ENCODE measurements at regions of chr6 and their contacts with region 1.

Region 1: DNA sequence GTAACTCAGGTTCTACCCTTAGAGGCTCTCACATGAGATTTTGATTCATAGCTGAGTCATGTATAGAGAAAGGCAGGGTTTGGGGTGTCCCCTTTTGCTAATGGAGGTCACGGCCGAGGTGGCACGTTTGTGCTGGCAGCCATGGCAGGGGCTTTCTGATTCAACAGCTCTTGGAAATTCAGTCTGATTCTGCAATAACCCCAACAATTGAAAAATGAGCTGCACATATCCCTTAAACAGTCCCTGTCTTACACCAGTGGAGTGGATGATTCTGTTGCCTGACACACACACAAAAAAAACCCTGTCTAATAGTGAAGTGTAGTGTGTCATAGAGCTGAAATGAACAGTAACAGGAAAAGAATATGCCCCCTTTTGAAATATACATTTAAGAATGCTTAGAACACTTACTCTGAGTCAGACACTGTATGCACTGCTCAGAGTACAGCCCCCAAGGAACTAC is 40.4 kb upstream of the ARG1 start:
- DNase-seq: peak in 1 of 9 donors; percentile 34
- ATAC-seq: peak; percentile 31
- H3K4me3 ChIP-seq: no peak overlapping the region
- H3K4me3 Mint-ChIP-seq: peak overlapping the region in 4 of 10 donors; percentile 7 to 49 (median 24)
- H3K27ac ChIP-seq: peak overlapping the region; percentile 51
- H3K27ac Mint-ChIP-seq: peak overlapping the region; percentile 1 to 94 (median 85)
- H3K4me1 ChIP-seq: peaks cover 4 to 34% of the 10 kb centered on the region in 2 donors
- H3K4me1 Mint-ChIP-seq: peaks cover 31 to 71% (median 62%) of the 10 kb centered on the region in 7 donors
- H3K27me3 ChIP-seq: no peaks in the 10 kb centered on the region
- H3K27me3 Mint-ChIP-seq: peaks cover 0 to 23% (median 4%) of the 10 kb centered on the region in 5 donors

Region 2: GRCh38 chr6:131116749-131117360 is 415.8 kb before region 1 on chr6:
- CTCF ChIA-PET with region 1: interaction called, 7 read pairs
- POLR2A ChIA-PET with region 1: no interaction called
- intact Hi-C with region 1: loop called (anchors 1 to 5 kb)
- DNase-seq: peak in 6 of 9 donors; percentile 26 to 54 (median 42)
- ATAC-seq: peak; percentile 49
- H3K4me3 ChIP-seq: no peak overlapping the region
- H3K4me3 Mint-ChIP-seq: no peak overlapping the region
- H3K27ac ChIP-seq: no peak overlapping the region
- H3K27ac Mint-ChIP-seq: no peak overlapping the region
- H3K4me1 ChIP-seq: no peaks in the 10 kb centered on the region
- H3K4me1 Mint-ChIP-seq: peaks cover 0 to 2% (median 0%) of the 10 kb centered on the region in 7 donors
- H3K27me3 ChIP-seq: no peaks in the 10 kb centered on the region
- H3K27me3 Mint-ChIP-seq: peaks cover 0 to 8% (median 0%) of the 10 kb centered on the region in 5 donors

Region 3: GRCh38 chr6:131205481-131206244 is 326.9 kb before region 1 on chr6:
- CTCF ChIA-PET with region 1: interaction called, 78 read pairs
- POLR2A ChIA-PET with region 1: interaction called, 88 read pairs
- intact Hi-C with region 1: loop called in 1 of 2 experiments (anchors 1 kb)
- DNase-seq: peak in 2 of 9 donors; percentile 32 to 35
- ATAC-seq: no peak
- H3K4me3 ChIP-seq: no peak overlapping the region
- H3K4me3 Mint-ChIP-seq: peak overlapping the region in 8 of 10 donors; percentile 7 to 49 (median 31)
- H3K27ac ChIP-seq: peak overlapping the region; percentile 20
- H3K27ac Mint-ChIP-seq: peak overlapping the region in 8 of 9 donors; percentile 46 to 89 (median 74)
- H3K4me1 ChIP-seq: peaks cover 12 to 45% of the 10 kb centered on the region in 2 donors
- H3K4me1 Mint-ChIP-seq: peaks cover 36 to 72% (median 65%) of the 10 kb centered on the region in 7 donors
- H3K27me3 ChIP-seq: no peaks in the 10 kb centered on the region
- H3K27me3 Mint-ChIP-seq: no peaks in the 10 kb centered on the region

Region 4: GRCh38 chr6:131443514-131443913 is 89.1 kb before region 1 on chr6:
- CTCF ChIA-PET with region 1: no interaction called
- POLR2A ChIA-PET with region 1: no interaction called
- intact Hi-C with region 1: loop called in 1 of 2 experiments (anchors 5 kb)
- DNase-seq: peak in 7 of 9 donors; percentile 38 to 53 (median 49)
- ATAC-seq: peak; percentile 80
- H3K4me3 ChIP-seq: peak overlapping the region; percentile 70
- H3K4me3 Mint-ChIP-seq: peak overlapping the region; percentile 82 to 97 (median 92)
- H3K27ac ChIP-seq: peak overlapping the region; percentile 60
- H3K27ac Mint-ChIP-seq: peak overlapping the region; percentile 85 to 97 (median 93)
- H3K4me1 ChIP-seq: peaks cover 0 to 18% of the 10 kb centered on the region in 2 donors
- H3K4me1 Mint-ChIP-seq: peaks cover 23 to 91% (median 75%) of the 10 kb centered on the region in 7 donors
- H3K27me3 ChIP-seq: no peaks in the 10 kb centered on the region
- H3K27me3 Mint-ChIP-seq: no peaks in the 10 kb centered on the region

Region 5: DNA sequence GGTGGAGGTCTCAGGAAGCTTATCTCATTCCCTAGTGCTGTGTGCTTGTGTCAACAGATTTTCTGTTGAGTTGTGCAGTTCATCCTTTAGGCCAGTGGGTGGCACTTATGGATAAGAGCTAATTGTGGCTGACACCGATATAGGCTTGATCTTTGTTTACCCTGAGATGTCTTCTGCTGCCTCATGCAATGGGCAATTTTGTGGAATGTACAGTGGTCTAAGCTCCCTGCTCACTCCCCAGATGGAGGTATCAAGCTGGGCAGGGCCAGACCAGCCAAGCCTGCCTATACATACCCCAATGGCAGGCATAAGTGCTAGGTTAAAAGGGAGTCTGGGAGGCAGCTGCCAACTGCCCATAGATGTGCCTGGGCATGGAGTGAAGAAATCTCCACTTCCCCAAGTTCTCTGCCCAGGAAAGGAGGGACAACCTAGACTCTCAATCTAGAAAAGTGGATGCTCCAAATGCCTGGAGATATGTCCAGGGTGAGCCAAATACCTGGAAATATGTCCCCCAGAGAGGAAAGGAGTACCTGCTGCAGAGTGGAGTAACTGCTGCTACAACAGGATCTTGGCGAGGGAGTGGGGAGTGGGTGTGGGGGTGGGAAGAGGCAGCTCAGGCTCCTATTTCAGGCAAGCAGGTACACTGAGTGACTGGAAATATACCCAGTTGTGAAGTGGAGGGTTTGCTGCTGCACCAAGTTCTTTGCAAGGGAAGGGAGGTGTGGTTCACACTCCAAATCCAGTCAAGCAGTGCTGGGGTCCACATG is 12.8 kb before region 1 on chr6:
- CTCF ChIA-PET with region 1: interaction called, 73 read pairs
- POLR2A ChIA-PET with region 1: interaction called, 9 read pairs
- intact Hi-C with region 1: loop called (anchors 1 kb)
- DNase-seq: peak in 7 of 9 donors; percentile 38 to 64 (median 55)
- ATAC-seq: peak; percentile 92
- H3K4me3 ChIP-seq: no peak overlapping the region
- H3K4me3 Mint-ChIP-seq: no peak overlapping the region
- H3K27ac ChIP-seq: no peak overlapping the region
- H3K27ac Mint-ChIP-seq: peak overlapping the region in 6 of 9 donors; percentile 29 to 69 (median 40)
- H3K4me1 ChIP-seq: peaks cover 0 to 9% of the 10 kb centered on the region in 2 donors
- H3K4me1 Mint-ChIP-seq: peaks cover 8 to 25% (median 20%) of the 10 kb centered on the region in 7 donors
- H3K27me3 ChIP-seq: no peaks in the 10 kb centered on the region
- H3K27me3 Mint-ChIP-seq: peaks cover 0 to 8% (median 0%) of the 10 kb centered on the region in 5 donors

Measured in naive thymus-derived CD4-positive, alpha-beta T cell (primary cell).